ENCODE measurements at regions of chr11 and their contacts with region 1.

Region 1: GRCh38 chr11:31870609-31871309 is 59.6 kb upstream of the PAX6 start:
- DNase-seq: peak; percentile 96
- H3K4me3 ChIP-seq: no peak overlapping the region
- H3K27ac ChIP-seq: no peak overlapping the region
- H3K4me1 ChIP-seq: no peaks in the 10 kb centered on the region
- H3K27me3 ChIP-seq: peaks cover 63% of the 10 kb centered on the region
- CTCF ChIP-seq: peak; percentile 100

Region 2: GRCh38 chr11:31240338-31240904 is 630.3 kb before region 1 on chr11:
- CTCF ChIA-PET with region 1: interaction called, 3 read pairs
- POLR2A ChIA-PET with region 1: no interaction called
- intact Hi-C with region 1: loop called (anchors 1 kb)
- DNase-seq: peak; percentile 91
- H3K4me3 ChIP-seq: no peak overlapping the region
- H3K27ac ChIP-seq: no peak overlapping the region
- H3K4me1 ChIP-seq: peaks cover 20% of the 10 kb centered on the region
- H3K27me3 ChIP-seq: no peaks in the 10 kb centered on the region
- CTCF ChIP-seq: peak; percentile 99

Region 3: GRCh38 chr11:31397239-31397834 is 473.4 kb before region 1 on chr11:
- CTCF ChIA-PET with region 1: interaction called, 24 read pairs
- POLR2A ChIA-PET with region 1: no interaction called
- intact Hi-C with region 1: loop called (anchors 1 kb)
- DNase-seq: peak; percentile 69
- H3K4me3 ChIP-seq: no peak overlapping the region
- H3K27ac ChIP-seq: no peak overlapping the region
- H3K4me1 ChIP-seq: no peaks in the 10 kb centered on the region
- H3K27me3 ChIP-seq: no peaks in the 10 kb centered on the region
- CTCF ChIP-seq: peak; percentile 99

Region 4: GRCh38 chr11:31487848-31488247 is 382.9 kb before region 1 on chr11:
- CTCF ChIA-PET with region 1: interaction called, 5 read pairs
- POLR2A ChIA-PET with region 1: no interaction called
- intact Hi-C with region 1: loop called (anchors 1 kb)
- DNase-seq: peak; percentile 91
- H3K4me3 ChIP-seq: no peak overlapping the region
- H3K27ac ChIP-seq: no peak overlapping the region
- H3K4me1 ChIP-seq: peaks cover 6% of the 10 kb centered on the region
- H3K27me3 ChIP-seq: no peaks in the 10 kb centered on the region
- CTCF ChIP-seq: peak; percentile 92

Region 5: DNA sequence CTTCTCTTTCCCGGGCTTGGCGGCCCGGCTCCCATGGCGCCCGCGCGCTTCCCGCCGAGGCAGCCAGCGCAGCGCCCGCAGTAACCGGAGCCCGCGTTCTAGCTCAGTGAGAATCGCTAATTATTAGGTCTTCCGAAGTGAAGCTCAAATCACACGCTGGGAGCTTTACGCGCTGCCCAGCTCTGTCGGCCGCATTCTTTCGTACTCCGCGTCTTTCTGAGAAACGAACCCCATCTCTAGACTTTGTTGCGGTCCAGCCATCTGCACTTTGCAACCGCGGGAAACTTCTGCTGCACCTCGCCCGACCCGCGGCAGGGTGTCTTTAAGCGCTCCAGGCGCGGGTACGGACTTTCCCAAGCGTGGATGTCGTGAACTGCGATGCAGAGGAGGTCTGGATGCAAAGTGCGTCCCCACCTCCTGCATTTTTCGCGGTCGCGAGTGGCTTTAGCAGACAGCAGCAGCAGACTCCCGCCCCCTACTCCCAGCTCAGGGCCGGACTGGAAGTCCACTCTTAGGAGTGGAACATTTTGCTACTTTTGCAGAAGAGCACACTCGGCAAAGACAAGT is 53.6 kb before region 1 on chr11:
- CTCF ChIA-PET with region 1: no interaction called
- POLR2A ChIA-PET with region 1: interaction called, 13 read pairs
- intact Hi-C with region 1: no loop called
- DNase-seq: peak; percentile 81
- H3K4me3 ChIP-seq: peak overlapping the region; percentile 44
- H3K27ac ChIP-seq: no peak overlapping the region
- H3K4me1 ChIP-seq: peaks cover 58% of the 10 kb centered on the region
- H3K27me3 ChIP-seq: peaks cover 100% of the 10 kb centered on the region
- CTCF ChIP-seq: no peak

Region 6: DNA sequence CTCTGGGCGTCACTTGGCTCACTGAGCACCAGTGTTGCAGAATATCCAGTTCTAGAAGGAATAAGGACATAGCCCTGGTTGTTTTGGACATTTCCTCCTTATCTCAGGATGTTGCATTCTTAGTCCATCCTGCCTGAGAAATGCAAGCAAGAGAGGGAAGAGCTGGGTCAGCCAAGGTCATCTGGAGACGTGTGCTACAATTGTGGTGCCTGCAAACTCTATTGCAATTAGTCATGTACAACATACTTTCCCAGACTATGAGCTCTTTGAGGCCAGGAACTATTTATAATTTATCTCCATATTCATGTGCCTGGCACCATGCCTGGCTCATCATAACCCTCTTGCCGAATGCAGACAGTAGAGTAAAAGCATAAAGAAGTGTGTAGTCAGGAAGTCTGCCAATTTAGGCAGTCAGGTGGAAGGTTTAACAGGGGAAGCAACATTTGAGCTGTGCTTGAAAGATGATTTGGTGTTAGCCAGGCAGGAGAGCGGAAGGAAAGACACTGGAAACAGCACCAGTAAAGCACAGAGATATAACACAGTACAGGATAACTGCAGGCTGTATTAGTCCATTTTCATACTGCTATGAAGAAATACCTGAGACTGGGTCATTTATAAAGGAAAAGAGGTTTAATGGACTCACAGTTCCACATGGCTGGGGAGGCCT is 69.7 kb after region 1 on chr11:
- CTCF ChIA-PET with region 1: no interaction called
- POLR2A ChIA-PET with region 1: no interaction called
- intact Hi-C with region 1: no loop called
- DNase-seq: peak; percentile 48
- H3K4me3 ChIP-seq: no peak overlapping the region
- H3K27ac ChIP-seq: no peak overlapping the region
- H3K4me1 ChIP-seq: no peaks in the 10 kb centered on the region
- H3K27me3 ChIP-seq: peaks cover 32% of the 10 kb centered on the region
- CTCF ChIP-seq: no peak

Region 7: GRCh38 chr11:32118025-32118974 is 247.5 kb after region 1 on chr11:
- CTCF ChIA-PET with region 1: no interaction called
- POLR2A ChIA-PET with region 1: no interaction called
- intact Hi-C with region 1: no loop called
- DNase-seq: peak; percentile 53
- H3K4me3 ChIP-seq: no peak overlapping the region
- H3K27ac ChIP-seq: no peak overlapping the region
- H3K4me1 ChIP-seq: peaks cover 4% of the 10 kb centered on the region
- H3K27me3 ChIP-seq: peaks cover 7% of the 10 kb centered on the region
- CTCF ChIP-seq: no peak

Region 8: GRCh38 chr11:32200136-32200847 is 329.5 kb after region 1 on chr11:
- CTCF ChIA-PET with region 1: no interaction called
- POLR2A ChIA-PET with region 1: no interaction called
- intact Hi-C with region 1: no loop called
- DNase-seq: no peak
- H3K4me3 ChIP-seq: no peak overlapping the region
- H3K27ac ChIP-seq: no peak overlapping the region
- H3K4me1 ChIP-seq: no peaks in the 10 kb centered on the region
- H3K27me3 ChIP-seq: peaks cover 50% of the 10 kb centered on the region
- CTCF ChIP-seq: no peak

Region 9: GRCh38 chr11:32253706-32254105 is 382.9 kb after region 1 on chr11:
- CTCF ChIA-PET with region 1: no interaction called
- POLR2A ChIA-PET with region 1: no interaction called
- intact Hi-C with region 1: no loop called
- DNase-seq: no peak
- H3K4me3 ChIP-seq: no peak overlapping the region
- H3K27ac ChIP-seq: no peak overlapping the region
- H3K4me1 ChIP-seq: no peaks in the 10 kb centered on the region
- H3K27me3 ChIP-seq: peaks cover 36% of the 10 kb centered on the region
- CTCF ChIP-seq: no peak